ENCODE measurements at regions of chr21 and their contacts with region 1.

Region 1: DNA sequence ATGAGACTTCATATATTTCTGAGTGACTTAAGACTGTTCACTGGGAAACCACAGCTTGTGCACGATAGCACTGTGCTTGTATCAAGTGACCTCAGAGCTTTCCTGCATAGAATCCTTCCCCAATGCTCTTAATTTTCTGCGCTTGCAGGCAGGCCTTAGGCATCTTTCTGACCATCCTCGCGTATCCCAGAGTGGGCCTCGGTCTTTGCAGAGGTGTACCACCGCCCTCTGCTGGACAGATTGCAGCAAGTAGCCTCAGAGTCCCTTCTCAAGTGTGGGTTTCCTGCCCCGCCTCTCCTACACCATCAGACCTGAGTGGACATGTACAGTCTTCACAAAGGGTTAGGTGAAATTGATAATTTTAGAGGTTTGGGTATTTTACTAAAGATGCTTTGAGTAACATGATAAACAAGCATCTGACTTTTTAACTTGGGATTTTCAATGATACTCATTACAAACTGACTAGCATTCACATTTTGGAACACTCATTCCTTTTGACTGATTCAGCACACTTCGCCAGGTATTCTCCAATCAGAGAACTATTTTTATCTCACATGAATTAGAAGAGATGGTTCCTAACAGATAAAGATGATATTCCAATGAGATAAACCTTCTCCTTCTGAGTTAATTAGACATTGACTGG is 246.5 kb upstream of the USP25 start:
- DNase-seq: peak; percentile 84 to 92
- ATAC-seq: peak; percentile 100

Region 2: GRCh38 chr21:14259747-14260146 is 1223.5 kb before region 1 on chr21:
- intact Hi-C with region 1: loop called in 1 of 2 experiments (anchors 10 kb)
- DNase-seq: no peak
- ATAC-seq: peak; percentile 74

Region 3: DNA sequence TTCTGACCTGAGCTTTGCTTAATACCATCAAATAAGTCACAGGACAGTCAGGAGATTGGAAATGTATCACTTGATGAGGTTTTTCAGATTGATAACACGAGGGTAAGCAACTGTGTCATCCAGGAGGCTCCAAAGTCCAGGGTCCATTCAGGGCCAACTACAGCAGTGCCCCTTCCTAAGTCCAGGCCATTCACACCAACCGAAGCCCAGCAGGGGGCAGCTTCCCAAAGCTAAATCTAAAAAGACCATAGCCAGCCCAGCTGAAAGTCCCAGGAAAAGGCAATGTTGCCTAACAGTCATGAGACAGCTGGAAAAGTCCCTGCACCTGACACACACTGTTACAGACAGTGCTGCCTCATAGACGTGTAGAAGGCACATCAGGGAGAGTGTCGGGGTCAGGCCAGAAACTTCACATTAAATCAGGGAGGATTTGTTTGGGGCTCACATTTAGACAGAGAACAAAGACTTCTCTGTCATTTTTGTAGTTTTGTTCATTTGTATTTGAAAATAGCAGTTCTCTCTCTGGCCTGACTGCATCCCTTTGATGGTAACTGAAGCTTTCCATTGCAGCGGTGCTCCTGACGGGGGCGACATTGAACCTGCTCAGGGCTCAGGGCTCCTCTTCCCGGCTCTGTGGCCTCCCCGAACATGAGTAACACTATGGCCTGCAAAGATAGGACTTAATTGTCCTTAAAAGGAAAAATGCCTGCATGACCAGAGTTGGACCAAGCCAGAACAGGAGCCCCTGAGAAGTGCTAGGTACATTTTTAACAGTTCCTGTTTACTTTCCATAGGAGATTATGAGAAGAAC is 618.8 kb before region 1 on chr21:
- intact Hi-C with region 1: loop called in 1 of 2 experiments (anchors 5 kb)
- DNase-seq: peak; percentile 74 to 79
- ATAC-seq: peak; percentile 90

Region 4: GRCh38 chr21:15051644-15052458 is 431.4 kb before region 1 on chr21:
- intact Hi-C with region 1: loop called in 1 of 2 experiments (anchors 10 kb)
- DNase-seq: peak in 1 of 2 donors; percentile 25
- ATAC-seq: peak; percentile 77